Activated CD4-positive, alpha-beta memory T cell treated with anti-CD3 and anti-CD28 coated beads for 36 hours (primary cell): ENCODE measurements at regions of chr2 and their contacts with region 1.

Region 1: DNA sequence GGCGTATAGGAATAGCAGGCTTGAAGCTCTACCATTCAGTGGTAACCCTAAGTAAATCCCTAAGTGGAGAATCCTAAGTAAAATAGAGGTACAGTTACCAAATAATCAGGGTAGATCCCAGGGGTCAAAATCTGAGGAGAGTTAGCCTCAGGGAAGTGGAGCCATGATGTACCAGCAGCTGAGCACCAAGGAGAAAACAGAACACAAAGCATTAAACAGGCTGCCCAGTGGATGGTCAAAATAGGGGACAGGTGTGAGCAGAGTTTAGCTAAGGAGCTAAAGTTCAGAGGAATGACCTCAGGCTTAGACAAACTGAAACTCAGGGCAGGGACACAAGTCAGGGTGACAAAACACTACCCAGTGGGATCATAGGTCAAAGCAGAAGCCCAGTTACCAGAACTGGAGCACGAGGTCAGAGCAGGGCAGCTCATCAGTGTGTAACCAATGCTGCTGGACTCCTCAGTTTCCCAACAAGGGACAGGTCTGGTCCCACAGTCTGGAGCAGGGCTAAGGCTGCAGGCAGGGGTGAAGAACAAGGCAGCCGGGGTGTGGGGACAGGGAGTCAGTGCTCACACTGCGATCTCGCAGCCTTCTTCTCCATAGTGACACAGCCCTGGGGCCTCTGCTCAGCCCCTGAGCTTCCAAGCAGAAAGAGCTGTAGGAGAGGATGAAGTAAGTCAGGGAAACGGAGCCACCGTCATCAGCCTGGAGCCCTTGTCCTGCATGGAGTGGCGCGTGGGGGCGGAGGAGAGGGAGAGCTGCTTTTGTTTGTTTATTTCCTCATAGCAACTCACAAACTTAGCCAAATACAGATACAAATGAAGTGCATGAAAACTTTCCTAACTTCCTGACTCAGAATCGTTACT is 264.0 kb downstream of the MREG start:
- DNase-seq: no peak
- H3K4me3 Mint-ChIP-seq: no peak overlapping the region
- H3K27ac Mint-ChIP-seq: no peak overlapping the region
- H3K4me1 Mint-ChIP-seq: peaks cover 61% of the 10 kb centered on the region
- H3K27me3 Mint-ChIP-seq: no peaks in the 10 kb centered on the region

Region 2: DNA sequence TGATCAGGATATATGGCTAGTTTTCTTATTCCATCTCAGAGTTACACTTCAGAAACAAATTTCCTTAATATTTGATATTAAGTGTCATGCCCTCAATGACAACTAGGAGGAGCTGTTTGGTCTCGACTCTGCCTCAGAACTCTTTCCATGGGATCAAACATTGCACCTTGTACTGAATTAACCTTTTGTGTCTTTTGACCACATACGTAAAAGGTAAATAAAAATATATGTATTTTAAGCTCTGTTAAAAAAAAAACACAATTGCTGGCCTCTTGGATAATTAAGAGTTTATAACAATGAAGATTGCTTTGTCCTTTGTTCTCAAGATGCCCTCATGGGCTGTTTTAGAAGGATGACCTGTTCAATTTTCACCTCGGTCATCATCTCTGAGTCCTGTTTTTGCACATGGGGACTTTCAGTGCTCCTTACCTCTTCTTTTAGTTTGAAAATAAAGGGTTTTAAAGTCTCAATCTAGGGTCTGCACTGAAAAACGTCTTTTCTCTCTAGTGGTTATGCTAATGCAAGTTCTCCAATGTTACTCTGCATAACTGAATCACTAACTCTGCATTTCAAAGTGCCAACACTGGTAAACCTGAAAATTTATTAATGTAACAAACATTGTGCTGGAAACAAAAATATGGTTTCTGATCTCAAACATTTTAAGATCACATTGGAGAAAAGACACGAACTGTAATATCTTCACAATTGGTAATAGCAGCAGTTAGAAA is 294.6 kb before region 1 on chr2:
- CTCF ChIA-PET with region 1: interaction called, 4 read pairs
- POLR2A ChIA-PET with region 1: no interaction called
- intact Hi-C with region 1: loop called (anchors 10 kb)
- DNase-seq: no peak
- H3K4me3 Mint-ChIP-seq: no peak overlapping the region
- H3K27ac Mint-ChIP-seq: no peak overlapping the region
- H3K4me1 Mint-ChIP-seq: no peaks in the 10 kb centered on the region
- H3K27me3 Mint-ChIP-seq: peaks cover 13% of the 10 kb centered on the region

Region 3: GRCh38 chr2:215624423-215624829 is 124.9 kb before region 1 on chr2:
- CTCF ChIA-PET with region 1: no interaction called
- POLR2A ChIA-PET with region 1: no interaction called
- intact Hi-C with region 1: no loop called
- DNase-seq: no peak
- H3K4me3 Mint-ChIP-seq: no peak overlapping the region
- H3K27ac Mint-ChIP-seq: no peak overlapping the region
- H3K4me1 Mint-ChIP-seq: peaks cover 4% of the 10 kb centered on the region
- H3K27me3 Mint-ChIP-seq: peaks cover 4% of the 10 kb centered on the region

Region 4: DNA sequence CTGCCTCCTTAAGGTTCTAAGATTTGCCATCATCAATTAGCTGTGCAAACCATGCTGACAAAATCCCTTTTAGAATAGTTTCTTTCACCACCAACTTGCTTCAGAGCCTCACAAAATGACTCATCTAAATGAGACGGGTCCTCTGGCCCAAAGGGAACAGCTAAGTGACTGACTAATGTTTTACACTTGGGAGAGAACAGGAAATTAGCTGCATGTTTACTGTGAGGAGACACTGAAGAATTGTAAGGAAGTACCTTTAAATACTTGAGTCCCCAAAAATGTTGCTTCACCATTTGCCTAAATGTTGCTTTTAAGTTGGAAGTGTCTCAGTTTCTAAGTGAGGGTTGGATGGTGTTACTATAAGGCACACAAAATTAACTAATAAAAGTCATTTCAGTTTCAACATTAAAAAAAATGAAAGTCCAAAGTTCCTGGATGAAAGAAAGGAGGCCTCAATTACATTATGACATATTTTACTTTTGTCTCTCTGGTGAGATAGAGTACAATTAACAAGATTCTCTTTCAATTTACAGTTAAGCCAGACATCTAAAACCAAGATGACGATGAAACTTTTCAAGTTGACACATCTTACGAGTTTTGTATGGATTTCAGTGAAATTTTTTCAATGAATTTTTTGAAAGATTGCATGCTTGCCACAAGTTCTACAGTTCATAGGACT is 84.3 kb before region 1 on chr2:
- CTCF ChIA-PET with region 1: no interaction called
- POLR2A ChIA-PET with region 1: no interaction called
- intact Hi-C with region 1: loop called (anchors 1 kb)
- DNase-seq: no peak
- H3K4me3 Mint-ChIP-seq: no peak overlapping the region
- H3K27ac Mint-ChIP-seq: peak overlapping the region; percentile 54
- H3K4me1 Mint-ChIP-seq: peaks cover 15% of the 10 kb centered on the region
- H3K27me3 Mint-ChIP-seq: peaks cover 8% of the 10 kb centered on the region

Region 5: DNA sequence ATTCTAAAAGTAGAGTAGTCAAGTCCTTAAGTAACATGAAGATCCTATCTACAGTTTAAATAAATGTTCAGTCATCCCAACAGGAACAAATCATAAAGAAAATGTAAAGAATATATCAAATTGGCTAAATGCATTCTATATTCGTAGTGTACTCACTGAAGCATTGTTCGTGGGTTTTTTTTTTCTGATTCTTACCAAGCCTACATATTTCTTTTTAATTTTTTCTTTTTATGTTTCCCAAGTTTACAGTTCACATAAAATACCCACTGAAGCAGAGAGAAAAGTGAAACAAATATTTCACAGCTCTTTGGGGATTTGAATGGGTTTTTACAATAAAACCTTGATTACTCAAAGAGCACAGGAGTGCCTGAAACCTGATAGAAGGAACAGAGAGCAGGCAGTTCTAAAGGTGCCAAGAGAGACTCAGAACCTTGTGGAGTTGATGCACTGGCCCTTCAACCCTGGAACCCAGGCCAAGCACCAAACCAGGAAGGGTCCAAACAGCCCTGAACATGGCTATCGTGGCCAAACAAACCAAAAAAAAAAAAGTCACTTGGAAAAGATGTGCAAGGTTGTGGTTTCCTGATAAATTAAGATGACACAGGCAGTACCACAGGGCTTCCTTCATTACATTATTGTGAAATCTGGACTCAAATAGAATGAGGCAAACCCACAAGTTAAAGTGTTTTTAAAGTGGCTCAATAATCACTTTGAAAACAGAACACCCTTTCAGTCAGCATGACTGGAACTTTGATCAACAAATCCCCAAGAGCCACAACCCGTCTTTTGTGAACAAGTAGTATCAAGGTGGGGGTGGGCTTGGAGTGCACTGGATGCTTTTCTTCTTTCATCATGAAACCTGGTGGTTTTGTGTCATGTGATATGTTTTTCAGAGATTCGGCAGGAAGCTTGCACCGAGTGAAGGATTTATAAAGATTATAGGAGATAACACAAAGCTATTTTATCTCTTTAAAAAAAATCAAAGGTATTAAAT is 68.4 kb before region 1 on chr2:
- CTCF ChIA-PET with region 1: no interaction called
- POLR2A ChIA-PET with region 1: no interaction called
- intact Hi-C with region 1: loop called (anchors 1 kb)
- DNase-seq: peak; percentile 51
- H3K4me3 Mint-ChIP-seq: no peak overlapping the region
- H3K27ac Mint-ChIP-seq: peak overlapping the region; percentile 74
- H3K4me1 Mint-ChIP-seq: peaks cover 20% of the 10 kb centered on the region
- H3K27me3 Mint-ChIP-seq: no peaks in the 10 kb centered on the region

Region 6: DNA sequence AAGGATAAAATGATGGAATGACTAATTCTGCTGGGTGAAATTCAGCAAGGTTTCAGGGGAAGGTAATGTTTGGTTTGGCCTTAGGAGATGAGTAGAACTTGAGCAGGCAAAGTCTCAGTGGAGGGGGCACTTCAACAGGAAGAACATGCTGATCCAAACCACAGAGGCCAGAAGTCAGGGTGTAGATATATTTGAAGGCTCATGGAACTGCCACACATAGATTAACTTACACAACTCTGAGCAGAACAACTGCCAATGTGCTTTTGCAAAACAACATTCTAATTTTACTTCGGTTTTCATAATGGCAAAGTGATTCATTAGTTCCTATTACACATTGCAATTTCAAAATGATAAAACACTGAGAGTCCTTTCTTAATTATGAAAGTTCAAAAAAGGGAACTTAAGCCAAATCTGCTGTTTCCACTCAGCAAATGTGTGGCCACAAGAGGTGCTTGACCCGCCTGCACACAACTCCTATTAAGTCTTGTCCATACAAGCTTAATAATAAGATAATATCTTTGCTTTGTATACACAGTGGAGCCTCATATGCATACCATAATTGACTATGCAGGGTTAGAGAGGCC is 20.7 kb before region 1 on chr2:
- CTCF ChIA-PET with region 1: no interaction called
- POLR2A ChIA-PET with region 1: no interaction called
- intact Hi-C with region 1: loop called (anchors 1 kb)
- DNase-seq: no peak
- H3K4me3 Mint-ChIP-seq: no peak overlapping the region
- H3K27ac Mint-ChIP-seq: no peak overlapping the region
- H3K4me1 Mint-ChIP-seq: peaks cover 9% of the 10 kb centered on the region
- H3K27me3 Mint-ChIP-seq: no peaks in the 10 kb centered on the region

Region 7: DNA sequence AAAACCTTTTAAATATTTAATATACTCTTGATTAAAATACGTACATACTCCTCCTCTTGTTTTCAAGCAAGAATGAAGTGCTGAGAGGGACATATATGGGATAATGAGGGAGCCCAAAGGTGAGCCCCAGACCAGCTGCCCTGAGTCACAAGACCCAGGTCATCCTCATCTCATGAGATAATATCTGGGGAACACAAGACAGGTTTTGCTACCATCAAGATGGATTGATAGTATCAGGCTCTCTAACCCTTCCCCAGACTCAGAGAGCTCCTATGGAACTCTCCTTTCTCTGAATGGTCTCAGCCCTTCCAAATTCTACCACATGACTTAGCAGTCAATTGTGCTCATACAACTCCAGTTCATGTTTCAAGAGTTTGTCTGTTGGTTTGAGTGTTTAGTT is 14.7 kb after region 1 on chr2:
- CTCF ChIA-PET with region 1: no interaction called
- POLR2A ChIA-PET with region 1: interaction called, 3 read pairs
- intact Hi-C with region 1: loop called (anchors 2 kb)
- DNase-seq: no peak
- H3K4me3 Mint-ChIP-seq: no peak overlapping the region
- H3K27ac Mint-ChIP-seq: no peak overlapping the region
- H3K4me1 Mint-ChIP-seq: peaks cover 15% of the 10 kb centered on the region
- H3K27me3 Mint-ChIP-seq: peaks cover 5% of the 10 kb centered on the region

Region 8: DNA sequence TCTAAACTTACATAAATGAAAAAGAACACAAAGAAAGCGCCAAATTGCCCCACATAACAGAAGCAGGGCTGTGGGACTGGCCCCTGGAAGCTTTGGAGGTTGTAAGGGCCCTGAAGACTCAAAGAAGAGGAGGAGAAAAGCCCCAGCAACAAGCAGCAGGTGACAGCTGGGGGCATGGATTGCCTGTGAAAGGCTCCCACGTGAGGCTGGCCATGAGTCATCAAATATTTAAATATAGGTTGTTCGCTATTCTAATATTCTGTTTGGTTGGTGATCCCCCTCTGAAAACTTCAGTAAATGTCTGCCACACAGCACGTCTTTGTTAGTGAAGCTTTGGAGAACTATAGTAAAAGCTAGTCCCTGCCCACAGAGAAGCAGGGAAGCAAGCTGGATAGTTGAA is 131.6 kb after region 1 on chr2:
- CTCF ChIA-PET with region 1: no interaction called
- POLR2A ChIA-PET with region 1: no interaction called
- intact Hi-C with region 1: no loop called
- DNase-seq: no peak
- H3K4me3 Mint-ChIP-seq: no peak overlapping the region
- H3K27ac Mint-ChIP-seq: no peak overlapping the region
- H3K4me1 Mint-ChIP-seq: no peaks in the 10 kb centered on the region
- H3K27me3 Mint-ChIP-seq: peaks cover 11% of the 10 kb centered on the region